ENCODE measurements at regions of chr2 and their contacts with region 1.

Region 1: DNA sequence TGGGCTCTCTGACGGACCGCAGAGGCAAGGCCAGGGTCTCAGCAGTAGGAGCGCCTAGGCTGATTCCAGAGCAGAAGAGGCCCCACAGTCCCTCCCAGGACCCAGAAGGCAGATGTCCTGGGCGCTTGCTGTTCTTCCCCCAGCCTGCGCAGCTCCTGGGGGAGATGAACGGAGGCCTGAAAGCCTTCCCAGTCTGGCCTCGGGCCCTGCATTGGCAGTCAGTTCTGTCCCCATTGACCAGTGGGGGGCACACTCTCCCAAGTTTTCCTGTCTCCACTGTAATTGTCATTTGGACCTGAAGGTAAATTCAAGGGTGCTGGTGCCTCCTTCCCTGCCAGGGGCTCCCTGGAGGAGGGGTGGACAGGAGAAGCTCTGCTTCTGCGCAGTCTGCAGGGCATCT is 345.7 kb downstream of the CYP26B1 start:
- DNase-seq: peak; percentile 57 to 84
- H3K4me3 ChIP-seq: no peak overlapping the region
- H3K27ac ChIP-seq: no peak overlapping the region
- H3K4me1 ChIP-seq: peaks cover 0 to 16% (median 9%) of the 10 kb centered on the region in 4 donors
- H3K27me3 ChIP-seq: no peaks in the 10 kb centered on the region
- CTCF ChIP-seq: peak; percentile 73 to 78

Region 2: GRCh38 chr2:71609958-71610357 is 192.0 kb before region 1 on chr2:
- intact Hi-C with region 1: loop called (anchors 5 kb)
- DNase-seq: no peak
- H3K4me3 ChIP-seq: no peak overlapping the region
- H3K27ac ChIP-seq: no peak overlapping the region
- H3K4me1 ChIP-seq: peaks cover 0 to 13% (median 10%) of the 10 kb centered on the region in 4 donors
- H3K27me3 ChIP-seq: no peaks in the 10 kb centered on the region
- CTCF ChIP-seq: peak; percentile 31 to 38

Region 3: GRCh38 chr2:71995067-71995665 is 193.2 kb after region 1 on chr2:
- intact Hi-C with region 1: loop called (anchors 10 kb)
- DNase-seq: no peak
- H3K4me3 ChIP-seq: no peak overlapping the region
- H3K27ac ChIP-seq: no peak overlapping the region
- H3K4me1 ChIP-seq: no peaks in the 10 kb centered on the region
- H3K27me3 ChIP-seq: peaks cover 0 to 11% of the 10 kb centered on the region in 2 donors
- CTCF ChIP-seq: peak; percentile 55 to 65